ENCODE measurements at regions of chr4 and their contacts with region 1.

Region 1: GRCh38 chr4:110049951-110050925 is 137.6 kb downstream of the EGF start:
- DNase-seq: peak; percentile 72
- ATAC-seq: no peak
- H3K4me3 Mint-ChIP-seq: no peak overlapping the region
- H3K27ac Mint-ChIP-seq: no peak overlapping the region
- H3K4me1 Mint-ChIP-seq: peaks cover 2% of the 10 kb centered on the region
- H3K27me3 Mint-ChIP-seq: no peaks in the 10 kb centered on the region

Region 2: DNA sequence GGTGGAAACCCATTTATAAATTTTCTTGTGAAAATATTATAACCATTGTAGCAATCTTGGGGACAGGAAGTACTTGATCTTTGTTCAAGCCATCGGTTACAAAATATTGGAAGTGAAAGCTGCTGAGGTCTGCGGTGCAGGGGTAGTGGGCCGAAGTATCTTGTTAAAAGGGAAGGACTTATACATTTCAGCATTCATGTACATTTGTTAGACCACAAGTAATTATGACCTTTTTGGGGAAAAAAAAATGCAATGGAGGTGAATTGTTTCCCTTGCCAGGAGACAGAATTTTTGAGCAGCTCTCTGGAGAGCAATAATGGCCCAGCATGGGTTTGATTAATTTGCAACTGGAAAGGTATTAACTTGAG is 16.2 kb before region 1 on chr4:
- CTCF ChIA-PET with region 1: interaction called, 19 read pairs
- POLR2A ChIA-PET with region 1: no interaction called
- DNase-seq: peak; percentile 44
- ATAC-seq: peak; percentile 60
- H3K4me3 Mint-ChIP-seq: peak overlapping the region; percentile 33
- H3K27ac Mint-ChIP-seq: no peak overlapping the region
- H3K4me1 Mint-ChIP-seq: peaks cover 18% of the 10 kb centered on the region
- H3K27me3 Mint-ChIP-seq: peaks cover 26% of the 10 kb centered on the region

Region 3: GRCh38 chr4:110087070-110087708 is 37.0 kb after region 1 on chr4:
- CTCF ChIA-PET with region 1: interaction called, 13 read pairs
- POLR2A ChIA-PET with region 1: no interaction called
- DNase-seq: no peak
- ATAC-seq: no peak
- H3K4me3 Mint-ChIP-seq: no peak overlapping the region
- H3K27ac Mint-ChIP-seq: no peak overlapping the region
- H3K4me1 Mint-ChIP-seq: peaks cover 36% of the 10 kb centered on the region
- H3K27me3 Mint-ChIP-seq: no peaks in the 10 kb centered on the region

Measured in activated CD8-positive, alpha-beta T cell treated with anti-CD3 and anti-CD28 coated beads, Interleukin-2, amount 10 ng/mL, durations not matched to agents 7 days and 5 days (primary cell).